ENCODE measurements at regions of chr12 and their contacts with region 1.

Region 1: GRCh38 chr12:107131832-107132616 is 38.7 kb upstream of the CRY1 start:
- DNase-seq: peak; percentile 3
- H3K4me3 ChIP-seq: no peak overlapping the region
- H3K27me3 ChIP-seq: no peaks in the 10 kb centered on the region
- CTCF ChIP-seq: peak; percentile 78

Region 2: DNA sequence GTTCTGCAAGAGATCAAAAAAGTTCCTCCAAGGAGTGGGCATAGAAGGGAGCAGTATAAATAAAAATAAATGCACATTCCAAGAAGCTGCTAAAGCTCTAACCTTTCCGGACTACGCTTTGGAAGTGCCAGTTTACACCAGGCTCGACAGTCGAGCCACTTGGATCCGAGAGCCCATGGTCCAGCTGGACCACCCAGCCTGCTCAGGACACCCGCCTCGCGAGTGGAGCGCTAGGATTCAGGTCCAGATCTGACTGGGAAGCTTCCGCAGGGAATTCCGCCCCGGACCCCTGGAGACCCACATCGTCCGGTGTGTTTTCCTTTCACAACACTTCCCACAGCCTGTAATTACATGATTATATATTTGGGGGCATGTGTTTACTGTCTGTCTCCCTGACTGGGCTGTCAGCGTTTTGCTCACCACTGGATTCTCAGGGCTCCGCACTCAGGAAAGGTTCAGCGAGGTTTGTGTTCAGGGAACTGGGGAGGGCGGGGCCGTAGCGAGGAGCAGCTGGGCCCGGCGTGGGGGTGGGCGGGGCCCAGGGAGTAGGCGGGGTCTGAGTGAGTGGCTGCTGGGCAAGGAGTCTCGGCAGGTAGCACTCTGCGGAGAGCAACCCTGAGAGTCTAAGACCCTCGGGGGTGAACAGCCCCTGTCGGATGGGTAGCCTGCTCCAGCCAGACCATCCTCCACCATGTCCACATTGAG is 228.6 kb before region 1 on chr12:
- CTCF ChIA-PET with region 1: no interaction called
- POLR2A ChIA-PET with region 1: no interaction called
- DNase-seq: peak; percentile 1
- H3K4me3 ChIP-seq: peak overlapping the region; percentile 30
- H3K27me3 ChIP-seq: 0 out of 2 replicates have a peak, but pooled peaks cover 3% of the 10 kb centered on the region
- CTCF ChIP-seq: no peak

Region 3: GRCh38 chr12:107144990-107145389 is 13.0 kb after region 1 on chr12:
- CTCF ChIA-PET with region 1: interaction called, 17 read pairs
- POLR2A ChIA-PET with region 1: no interaction called
- DNase-seq: no peak
- H3K4me3 ChIP-seq: no peak overlapping the region
- H3K27me3 ChIP-seq: no peaks in the 10 kb centered on the region
- CTCF ChIP-seq: no peak

Region 4: DNA sequence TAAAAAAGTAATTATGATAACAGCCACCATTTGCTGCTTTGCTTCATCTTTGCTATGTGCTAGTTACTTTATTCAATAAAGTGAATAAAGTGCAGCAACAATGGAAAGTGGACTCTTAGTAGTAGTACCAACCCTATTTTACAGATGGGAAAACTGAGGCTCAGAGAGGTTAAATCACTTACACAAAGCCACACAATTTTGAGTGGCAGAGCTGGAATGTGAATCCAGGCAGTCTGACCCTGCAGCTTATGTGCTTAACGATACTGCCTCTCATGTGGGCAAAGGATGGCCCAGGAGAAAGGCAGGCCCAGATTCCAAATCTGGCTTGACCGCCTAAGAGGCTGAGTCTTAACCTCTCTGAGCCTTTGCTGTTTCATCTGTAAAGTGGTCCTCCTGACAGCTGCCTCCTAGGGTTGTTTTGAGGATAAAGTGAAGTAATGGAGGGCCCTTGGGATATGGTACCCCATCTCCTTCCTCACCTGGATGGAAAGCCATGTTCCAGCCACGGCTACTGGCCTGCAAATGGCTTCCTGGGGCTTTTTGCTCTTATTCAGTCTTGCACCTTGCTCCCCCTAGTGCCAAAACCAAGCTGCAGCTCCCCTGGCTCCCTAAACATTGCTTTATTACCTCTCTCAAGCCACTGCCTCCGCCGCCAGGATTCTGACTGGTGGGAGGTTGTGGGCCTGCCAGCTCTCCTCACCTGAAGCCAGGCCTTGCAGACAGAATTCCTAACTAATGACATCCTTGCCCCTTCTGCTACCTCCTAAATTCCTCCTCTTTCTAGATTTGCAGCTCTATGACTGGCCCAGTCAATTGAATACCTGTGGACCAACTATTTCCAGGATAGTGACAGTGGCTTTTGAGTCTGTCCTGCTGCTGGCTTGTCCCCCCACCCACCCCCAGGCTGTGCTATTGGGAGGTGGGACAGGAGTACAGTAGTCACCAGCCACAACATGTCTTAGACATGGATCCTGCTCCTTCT is 270.3 kb after region 1 on chr12:
- CTCF ChIA-PET with region 1: interaction called, 65 read pairs
- POLR2A ChIA-PET with region 1: no interaction called
- DNase-seq: no peak
- H3K4me3 ChIP-seq: no peak overlapping the region
- H3K27me3 ChIP-seq: no peaks in the 10 kb centered on the region
- CTCF ChIP-seq: peak; percentile 68

Region 5: DNA sequence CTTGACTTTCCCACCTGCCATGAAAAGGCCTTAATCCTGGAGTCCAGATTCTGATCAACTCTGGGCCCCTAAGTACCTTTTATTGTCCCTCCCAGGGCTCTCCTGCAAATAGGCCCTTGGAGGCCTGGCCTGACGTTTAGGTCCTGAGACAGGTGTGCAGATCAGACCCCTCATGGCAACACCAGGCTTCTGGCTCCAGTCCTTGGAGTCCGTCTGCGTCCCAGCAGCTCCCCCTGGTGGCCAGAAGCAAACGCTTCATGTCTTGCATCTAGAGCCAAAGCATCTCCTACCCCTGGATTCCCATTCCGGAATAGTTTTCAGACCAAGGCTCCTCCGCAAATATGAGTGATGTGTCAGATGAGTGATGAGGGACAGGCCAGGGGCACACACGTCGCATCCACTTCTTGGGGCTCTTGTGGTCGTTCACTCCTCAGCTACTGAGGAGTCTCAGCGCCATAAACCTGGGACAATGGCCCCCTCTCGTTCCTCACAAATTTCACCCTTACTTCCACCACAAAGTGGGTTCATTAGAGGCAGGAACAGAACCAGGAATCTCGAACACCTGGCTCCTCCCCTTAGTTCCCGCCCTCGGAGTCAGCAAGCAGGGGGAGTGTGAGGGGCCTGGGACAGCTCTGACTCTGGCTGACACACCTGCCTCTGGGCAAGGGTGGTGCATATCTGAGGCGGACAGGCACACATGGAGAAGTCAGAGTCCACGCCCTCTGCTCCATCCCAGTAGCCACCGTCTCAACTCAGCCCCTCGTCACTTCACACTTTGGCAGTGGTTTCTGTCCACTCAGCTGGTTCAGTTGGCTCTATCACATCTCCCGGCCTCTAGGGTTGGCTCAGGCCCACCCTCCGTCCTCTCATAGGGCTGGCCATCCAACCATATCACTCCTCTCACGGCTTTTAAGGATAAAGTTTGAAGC is 475.7 kb after region 1 on chr12:
- CTCF ChIA-PET with region 1: interaction called, 341 read pairs
- POLR2A ChIA-PET with region 1: no interaction called
- DNase-seq: no peak
- H3K4me3 ChIP-seq: no peak overlapping the region
- H3K27me3 ChIP-seq: no peaks in the 10 kb centered on the region
- CTCF ChIP-seq: peak; percentile 95

Region 6: DNA sequence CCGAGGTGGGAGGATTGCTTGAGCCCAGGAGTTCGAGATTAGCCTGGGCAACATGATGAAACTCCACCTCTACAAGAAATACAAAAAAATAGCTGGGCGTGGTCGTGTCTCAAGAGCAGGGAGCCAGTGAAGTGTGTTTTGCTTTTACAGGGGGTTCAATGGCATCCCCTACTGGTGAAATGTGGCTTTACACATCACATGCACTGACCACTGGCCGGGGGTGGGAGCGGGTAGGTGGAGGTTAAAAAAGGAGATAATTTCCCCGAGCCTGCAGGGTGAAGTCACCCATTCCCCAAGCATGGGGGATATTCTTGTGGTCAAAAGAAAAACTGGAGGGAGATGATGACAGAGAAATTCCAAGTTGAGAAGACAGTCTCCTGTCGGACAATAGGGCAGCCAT is 490.0 kb after region 1 on chr12:
- CTCF ChIA-PET with region 1: interaction called, 14 read pairs
- POLR2A ChIA-PET with region 1: no interaction called
- DNase-seq: no peak
- H3K4me3 ChIP-seq: no peak overlapping the region
- H3K27me3 ChIP-seq: no peaks in the 10 kb centered on the region
- CTCF ChIP-seq: peak; percentile 32; the same call in 1 of the 2 replicates

Measured in BJ (cell line).